ENCODE measurements at regions of chr12 and their contacts with region 1.

Region 1: GRCh38 chr12:6867413-6868210 is at the start of gene TPI1:
- DNase-seq: peak; percentile 83
- ATAC-seq: peak; percentile 83
- H3K4me3 ChIP-seq: peak within 1 kb of the TSS; percentile 56 to 88 (median 68)
- H3K4me3 Mint-ChIP-seq: peak within 1 kb of the TSS; percentile 96
- H3K27ac ChIP-seq: peak within 1 kb of the TSS; percentile 70 to 77
- H3K27ac Mint-ChIP-seq: peak within 1 kb of the TSS; percentile 97
- H3K4me1 ChIP-seq: peaks cover 33 to 41% of the 10 kb centered on the region in 2 donors
- H3K4me1 Mint-ChIP-seq: peaks cover 50% of the 10 kb centered on the region
- H3K27me3 ChIP-seq: no peaks in the 10 kb centered on the region
- H3K27me3 Mint-ChIP-seq: no peaks in the 10 kb centered on the region
- CTCF ChIP-seq: no peak
- total RNA-seq, gene TPI1: 178 and 181 TPM in 2 replicates

Region 2: GRCh38 chr12:6697584-6698351 is 169.8 kb before region 1 on chr12:
- CTCF ChIA-PET with region 1: no interaction called
- POLR2A ChIA-PET with region 1: interaction called, 10 read pairs
- intact Hi-C with region 1: no loop called
- DNase-seq: peak; percentile 52
- ATAC-seq: no peak
- H3K4me3 ChIP-seq: peak overlapping the region in 1 of 5 experiments; percentile 6
- H3K4me3 Mint-ChIP-seq: peak overlapping the region; percentile 61
- H3K27ac ChIP-seq: peak overlapping the region in 1 of 2 donors; percentile 58
- H3K27ac Mint-ChIP-seq: peak overlapping the region; percentile 83
- H3K4me1 ChIP-seq: peaks cover 51 to 55% of the 10 kb centered on the region in 2 donors
- H3K4me1 Mint-ChIP-seq: peaks cover 60% of the 10 kb centered on the region
- H3K27me3 ChIP-seq: peaks cover 4 to 24% (median 15%) of the 10 kb centered on the region in 4 experiments
- H3K27me3 Mint-ChIP-seq: peaks cover 13% of the 10 kb centered on the region
- CTCF ChIP-seq: peak; percentile 28

Region 3: DNA sequence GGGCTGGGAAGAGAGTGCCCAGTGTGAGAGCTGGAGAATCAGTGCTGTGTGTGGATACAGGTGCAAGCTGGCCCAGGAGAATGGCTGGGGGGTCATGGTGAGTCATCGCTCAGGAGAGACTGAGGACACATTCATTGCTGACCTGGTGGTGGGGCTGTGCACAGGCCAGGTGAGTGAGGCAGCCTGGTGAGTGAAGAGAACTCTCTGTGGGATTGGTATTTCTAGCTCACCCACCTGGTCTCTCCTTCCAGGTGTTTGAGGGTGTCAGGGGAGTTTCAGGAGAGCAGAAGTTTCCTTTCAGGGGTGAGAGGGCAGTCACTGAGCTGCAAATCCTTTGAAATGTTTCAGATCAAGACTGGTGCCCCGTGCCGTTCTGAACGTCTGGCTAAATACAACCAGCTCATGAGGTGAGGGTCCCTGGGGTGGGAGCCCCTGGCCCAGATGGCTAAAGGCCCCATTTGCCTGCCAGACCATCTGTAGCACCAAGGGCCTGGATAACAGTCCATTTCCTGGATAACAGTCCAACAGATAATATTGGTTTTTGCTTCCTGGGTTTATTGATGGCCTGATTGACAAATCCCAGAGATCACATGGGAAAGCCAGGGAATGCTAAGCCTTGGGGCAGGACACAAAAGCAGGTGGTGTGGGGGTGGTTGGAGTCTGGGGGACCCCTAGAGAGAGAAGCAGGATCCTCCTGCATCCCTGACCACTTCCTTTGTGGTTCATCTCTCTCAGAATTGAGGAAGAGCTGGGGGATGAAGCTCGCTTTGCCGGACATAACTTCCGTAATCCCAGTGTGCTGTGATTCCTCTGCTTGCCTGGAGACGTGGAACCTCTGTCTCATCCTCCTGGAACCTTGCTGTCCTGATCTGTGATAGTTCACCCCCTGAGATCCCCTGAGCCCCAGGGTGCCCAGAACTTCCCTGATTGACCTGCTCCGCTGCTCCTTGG is 54.7 kb after region 1 on chr12:
- CTCF ChIA-PET with region 1: interaction called, 68 read pairs
- POLR2A ChIA-PET with region 1: interaction called, 6 read pairs
- intact Hi-C with region 1: loop called (anchors 1 kb)
- DNase-seq: peak; percentile 59
- ATAC-seq: peak; percentile 23
- H3K4me3 ChIP-seq: no peak overlapping the region
- H3K4me3 Mint-ChIP-seq: peak overlapping the region; percentile 60
- H3K27ac ChIP-seq: peak overlapping the region; percentile 54 to 57
- H3K27ac Mint-ChIP-seq: peak overlapping the region; percentile 41
- H3K4me1 ChIP-seq: peaks cover 39 to 50% of the 10 kb centered on the region in 2 donors
- H3K4me1 Mint-ChIP-seq: peaks cover 50% of the 10 kb centered on the region
- H3K27me3 ChIP-seq: no peaks in the 10 kb centered on the region
- H3K27me3 Mint-ChIP-seq: no peaks in the 10 kb centered on the region
- CTCF ChIP-seq: no peak

Region 4: DNA sequence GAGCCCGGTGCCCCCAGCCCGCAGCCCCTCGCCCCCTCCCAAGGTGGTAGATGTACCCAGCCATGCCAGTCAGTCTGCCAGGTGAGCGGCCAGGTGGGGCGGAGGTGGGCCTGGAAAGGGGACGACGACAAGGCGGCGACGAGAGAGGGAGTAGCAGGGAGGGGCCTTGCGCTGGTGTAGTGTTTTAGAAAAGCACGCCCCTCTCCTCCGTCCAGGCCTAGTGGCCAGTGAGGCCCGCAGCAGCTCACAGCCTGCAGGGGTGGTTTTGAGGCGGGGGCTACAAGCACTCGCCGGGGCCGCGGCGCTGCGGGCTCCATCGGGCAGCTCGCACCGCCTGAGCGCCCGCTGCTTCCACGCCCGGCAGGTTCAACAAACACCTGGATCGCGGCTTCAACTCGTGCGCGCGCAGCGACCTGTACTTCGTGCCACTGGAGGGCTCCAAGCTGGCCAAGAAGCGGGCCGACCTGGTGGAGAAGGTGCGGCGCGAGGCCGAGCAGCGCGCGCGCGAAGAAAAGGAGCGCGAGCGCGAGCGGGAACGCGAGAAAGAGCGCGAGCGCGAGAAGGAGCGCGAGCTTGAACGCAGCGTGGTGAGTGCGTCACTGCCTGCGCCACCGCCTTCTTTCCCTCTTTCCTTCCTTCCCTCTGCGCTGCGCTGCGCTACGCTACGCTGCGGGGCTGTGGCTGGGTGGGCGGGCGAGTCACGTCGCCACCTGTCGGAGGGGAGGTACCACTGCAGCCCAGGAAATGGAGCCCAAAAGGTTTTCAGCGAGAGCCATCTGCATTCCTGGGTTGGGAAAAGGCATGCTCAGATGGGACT is 70.1 kb after region 1 on chr12:
- CTCF ChIA-PET with region 1: interaction called, 27 read pairs
- POLR2A ChIA-PET with region 1: interaction called, 11 read pairs
- intact Hi-C with region 1: no loop called
- DNase-seq: peak; percentile 98
- ATAC-seq: peak; percentile 91
- H3K4me3 ChIP-seq: peak overlapping the region; percentile 28 to 94 (median 80)
- H3K4me3 Mint-ChIP-seq: peak overlapping the region; percentile 87
- H3K27ac ChIP-seq: peak overlapping the region; percentile 88 to 91
- H3K27ac Mint-ChIP-seq: peak overlapping the region; percentile 97
- H3K4me1 ChIP-seq: peaks cover 17 to 31% of the 10 kb centered on the region in 2 donors
- H3K4me1 Mint-ChIP-seq: peaks cover 37% of the 10 kb centered on the region
- H3K27me3 ChIP-seq: no peaks in the 10 kb centered on the region
- H3K27me3 Mint-ChIP-seq: no peaks in the 10 kb centered on the region
- CTCF ChIP-seq: peak; percentile 92

Region 5: GRCh38 chr12:6944381-6945186 is 77.0 kb after region 1 on chr12:
- CTCF ChIA-PET with region 1: interaction called, 27 read pairs
- POLR2A ChIA-PET with region 1: interaction called, 18 read pairs
- intact Hi-C with region 1: loop called (anchors 2 kb)
- DNase-seq: peak; percentile 91
- ATAC-seq: peak; percentile 46
- H3K4me3 ChIP-seq: peak overlapping the region; percentile 25 to 92 (median 80)
- H3K4me3 Mint-ChIP-seq: peak overlapping the region; percentile 97
- H3K27ac ChIP-seq: peak overlapping the region; percentile 93 to 99
- H3K27ac Mint-ChIP-seq: peak overlapping the region; percentile 97
- H3K4me1 ChIP-seq: peaks cover 56 to 73% of the 10 kb centered on the region in 2 donors
- H3K4me1 Mint-ChIP-seq: peaks cover 63% of the 10 kb centered on the region
- H3K27me3 ChIP-seq: no peaks in the 10 kb centered on the region
- H3K27me3 Mint-ChIP-seq: no peaks in the 10 kb centered on the region
- CTCF ChIP-seq: peak; percentile 90

Region 6: DNA sequence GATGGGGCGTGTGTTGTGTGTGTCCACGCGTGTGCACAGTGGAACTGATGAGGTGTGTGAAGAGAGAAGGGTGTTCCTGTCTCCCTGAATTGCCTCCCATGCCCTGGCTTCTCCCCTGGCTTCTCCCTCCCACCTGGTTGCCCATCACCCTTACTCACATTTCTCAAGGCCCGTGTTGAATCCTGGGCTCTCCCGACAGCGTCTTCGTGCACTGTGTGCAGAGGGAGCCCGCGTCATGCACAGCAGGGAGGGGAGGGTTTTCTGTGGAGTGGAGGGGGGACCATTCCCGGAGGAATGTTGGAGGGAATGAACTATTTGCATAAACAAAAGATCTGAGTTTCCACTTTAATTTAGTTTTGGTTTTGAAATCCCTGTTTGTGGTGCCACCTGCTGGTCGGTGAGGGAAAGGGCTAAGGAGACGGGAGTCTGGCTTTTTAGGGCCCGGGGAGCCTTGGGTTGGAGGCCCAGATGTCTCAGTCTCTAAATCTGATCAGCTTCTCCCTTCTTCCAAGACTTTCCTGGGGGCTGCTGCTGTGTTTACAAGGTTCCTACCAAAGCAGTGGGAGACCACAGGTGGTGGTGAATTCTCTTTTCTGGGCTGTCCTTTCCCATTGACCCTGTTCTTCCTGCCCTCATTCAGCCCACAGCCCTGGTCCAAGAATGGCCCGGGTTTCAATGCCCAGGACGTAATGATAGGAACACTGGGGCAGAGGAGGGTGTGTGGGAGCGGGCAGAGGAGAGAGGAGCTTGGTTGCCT is 224.8 kb after region 1 on chr12 and contains the start of gene C1R:
- CTCF ChIA-PET with region 1: interaction called, 6 read pairs
- POLR2A ChIA-PET with region 1: interaction called, 5 read pairs
- intact Hi-C with region 1: loop called (anchors 1 kb)
- DNase-seq: peak; percentile 74
- ATAC-seq: peak; percentile 78
- H3K4me3 ChIP-seq: peak within 1 kb of the TSS; percentile 15 to 61 (median 50)
- H3K4me3 Mint-ChIP-seq: peak within 1 kb of the TSS; percentile 90
- H3K27ac ChIP-seq: no peak within 1 kb of the TSS
- H3K27ac Mint-ChIP-seq: no peak within 1 kb of the TSS
- H3K4me1 ChIP-seq: peaks cover 0 to 12% of the 10 kb centered on the region in 2 donors
- H3K4me1 Mint-ChIP-seq: peaks cover 9% of the 10 kb centered on the region
- H3K27me3 ChIP-seq: peaks cover 0 to 3% (median 0%) of the 10 kb centered on the region in 4 experiments
- H3K27me3 Mint-ChIP-seq: peaks cover 4% of the 10 kb centered on the region
- CTCF ChIP-seq: peak; percentile 88
- total RNA-seq, gene C1R: 1.2 and 2.0 TPM in 2 replicates

Measured in B cell (primary cell).